ENCODE measurements at regions of chr6 and their contacts with region 1.

Region 1: GRCh38 chr6:108260809-108261569 is at the start of gene SNX3:
- DNase-seq: peak; percentile 81 to 94 (median 88)
- H3K4me3 ChIP-seq: peak within 1 kb of the TSS; percentile 56 to 100 (median 93)
- H3K27ac ChIP-seq: peak within 1 kb of the TSS; percentile 86 to 100 (median 98)
- H3K27me3 ChIP-seq: no peaks in the 10 kb centered on the region
- CTCF ChIP-seq: peak in 45 of 56 donors; percentile 0 to 67 (median 41)
- total RNA-seq, gene SNX3: 105 to 251 (median 168) TPM

Region 2: GRCh38 chr6:107977283-107977682 is 283.7 kb before region 1 on chr6:
- intact Hi-C with region 1: loop called in 1 of 2 experiments (anchors 10 kb)
- DNase-seq: no peak
- H3K4me3 ChIP-seq: no peak overlapping the region
- H3K27ac ChIP-seq: no peak overlapping the region
- H3K27me3 ChIP-seq: no peaks in the 10 kb centered on the region
- CTCF ChIP-seq: peak; percentile 22 to 78 (median 63)

Region 3: GRCh38 chr6:108074359-108075144 is 186.4 kb before region 1 on chr6 and contains the start of gene OSTM1:
- intact Hi-C with region 1: loop called (anchors 1 to 2 kb)
- DNase-seq: peak; percentile 76 to 96 (median 86)
- H3K4me3 ChIP-seq: peak within 1 kb of the TSS; percentile 59 to 100 (median 98)
- H3K27ac ChIP-seq: peak within 1 kb of the TSS; percentile 3 to 94 (median 85)
- H3K27me3 ChIP-seq: no peaks in the 10 kb centered on the region
- CTCF ChIP-seq: peak in 23 of 56 donors; percentile 3 to 64 (median 22)
- total RNA-seq, gene OSTM1: 19.6 to 54.7 (median 38.3) TPM

Region 4: DNA sequence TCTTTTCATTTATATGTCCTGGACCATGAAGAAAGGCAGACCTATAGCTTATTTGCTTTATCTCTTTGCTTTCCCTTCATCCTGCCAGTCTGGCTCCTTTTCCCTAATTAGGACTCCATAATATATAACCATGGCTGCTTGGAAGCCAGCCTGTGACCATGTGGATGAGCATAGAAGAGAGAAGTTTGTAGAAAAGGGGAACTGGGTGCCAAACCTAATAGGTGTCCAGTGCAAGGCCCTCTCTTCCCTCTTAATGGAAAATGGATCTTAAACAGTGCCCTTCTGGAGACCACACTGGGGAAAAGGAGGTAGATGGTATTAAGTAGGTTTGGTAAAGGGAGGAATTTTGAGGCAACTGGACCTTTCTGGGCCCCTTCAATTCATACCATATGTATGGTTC is 169.7 kb before region 1 on chr6:
- intact Hi-C with region 1: no loop called
- DNase-seq: no peak
- H3K4me3 ChIP-seq: no peak overlapping the region
- H3K27ac ChIP-seq: no peak overlapping the region
- H3K27me3 ChIP-seq: peaks cover 0 to 6% (median 0%) of the 10 kb centered on the region in 45 donors
- CTCF ChIP-seq: no peak

Region 5: GRCh38 chr6:108127826-108128225 is 133.2 kb before region 1 on chr6:
- intact Hi-C with region 1: no loop called
- DNase-seq: no peak
- H3K4me3 ChIP-seq: no peak overlapping the region
- H3K27ac ChIP-seq: no peak overlapping the region
- H3K27me3 ChIP-seq: peaks cover 0 to 38% (median 6%) of the 10 kb centered on the region in 45 donors
- CTCF ChIP-seq: no peak

Region 6: DNA sequence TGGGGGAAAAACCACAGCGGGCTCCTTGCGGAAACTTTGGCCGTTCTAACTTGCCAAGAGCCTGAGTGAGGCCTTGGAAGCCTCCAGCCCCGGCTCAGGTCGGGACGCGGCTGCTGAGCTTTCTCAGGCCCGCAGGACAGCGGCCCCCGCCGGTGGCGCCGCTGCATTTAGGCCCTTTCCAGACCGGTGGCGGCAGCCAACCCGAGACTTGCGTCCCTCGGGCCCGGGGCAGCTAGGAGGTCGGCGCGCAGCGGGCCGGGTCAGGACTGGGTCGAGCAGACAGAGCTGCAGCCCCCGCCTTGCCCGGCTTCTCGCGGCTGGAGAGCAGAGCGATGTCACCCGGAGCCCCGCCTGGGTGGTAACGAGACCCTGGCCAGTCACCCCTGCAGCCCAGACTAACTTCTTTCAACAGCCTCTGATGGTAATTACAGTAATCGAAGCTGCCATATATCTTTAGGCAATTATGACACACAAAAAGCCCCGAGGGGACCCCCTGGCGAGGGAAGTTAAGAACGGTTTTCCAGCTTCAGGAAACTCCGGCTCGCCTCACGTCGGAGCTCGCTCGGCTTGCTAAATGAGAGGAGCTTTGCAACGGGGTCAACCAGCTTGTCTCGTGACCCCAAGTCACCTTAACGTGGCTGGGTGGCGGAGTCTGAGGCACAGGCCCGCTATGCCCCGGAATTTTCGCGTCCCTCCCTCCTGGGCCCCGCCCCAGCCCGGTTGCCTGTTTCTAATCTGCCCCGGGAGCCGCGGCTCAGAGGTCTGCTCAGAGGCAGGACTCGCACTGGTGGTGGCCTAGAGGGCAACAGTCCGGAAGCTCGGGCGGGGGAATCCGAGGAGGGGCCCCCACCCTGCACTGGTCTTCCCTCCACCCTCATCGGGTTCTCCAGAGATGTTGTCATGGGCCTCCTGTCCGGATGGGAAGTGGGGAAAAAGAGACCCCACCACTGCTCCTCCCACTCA is 92.2 kb before region 1 on chr6:
- intact Hi-C with region 1: loop called in 1 of 2 experiments (anchors 10 kb)
- DNase-seq: no peak
- H3K4me3 ChIP-seq: peak overlapping the region in 58 of 59 donors; percentile 22 to 71 (median 52)
- H3K27ac ChIP-seq: peak overlapping the region in 40 of 59 donors; percentile 6 to 81 (median 63)
- H3K27me3 ChIP-seq: peaks cover 5 to 87% (median 63%) of the 10 kb centered on the region in 45 donors
- CTCF ChIP-seq: peak in 32 of 56 donors; percentile 11 to 51 (median 22)

Region 7: GRCh38 chr6:108294727-108295625 is 34.0 kb after region 1 on chr6 and contains the start of gene AFG1L:
- intact Hi-C with region 1: loop called (anchors 1 kb)
- DNase-seq: peak; percentile 91 to 97 (median 94)
- H3K4me3 ChIP-seq: peak within 1 kb of the TSS; percentile 66 to 98 (median 86)
- H3K27ac ChIP-seq: peak within 1 kb of the TSS; percentile 85 to 99 (median 96)
- H3K27me3 ChIP-seq: no peaks in the 10 kb centered on the region
- CTCF ChIP-seq: peak in 21 of 56 donors; percentile 5 to 56 (median 23)
- total RNA-seq, gene AFG1L: 9.7 to 29.5 (median 16.8) TPM